ENCODE measurements at regions of chr6 and their contacts with region 1.

Region 1: GRCh38 chr6:5471044-5471443 is 209.7 kb downstream of the FARS2 start:
- DNase-seq: no peak
- ATAC-seq: peak; percentile 70 to 81
- H3K4me3 ChIP-seq: no peak overlapping the region
- H3K27ac ChIP-seq: no peak overlapping the region
- H3K4me1 ChIP-seq: peaks cover 0 to 6% of the 10 kb centered on the region in 2 donors
- H3K27me3 ChIP-seq: no peaks in the 10 kb centered on the region
- CTCF ChIP-seq: peak; percentile 45 to 82 (median 63)
- POLR2A ChIP-seq: no peak

Region 2: DNA sequence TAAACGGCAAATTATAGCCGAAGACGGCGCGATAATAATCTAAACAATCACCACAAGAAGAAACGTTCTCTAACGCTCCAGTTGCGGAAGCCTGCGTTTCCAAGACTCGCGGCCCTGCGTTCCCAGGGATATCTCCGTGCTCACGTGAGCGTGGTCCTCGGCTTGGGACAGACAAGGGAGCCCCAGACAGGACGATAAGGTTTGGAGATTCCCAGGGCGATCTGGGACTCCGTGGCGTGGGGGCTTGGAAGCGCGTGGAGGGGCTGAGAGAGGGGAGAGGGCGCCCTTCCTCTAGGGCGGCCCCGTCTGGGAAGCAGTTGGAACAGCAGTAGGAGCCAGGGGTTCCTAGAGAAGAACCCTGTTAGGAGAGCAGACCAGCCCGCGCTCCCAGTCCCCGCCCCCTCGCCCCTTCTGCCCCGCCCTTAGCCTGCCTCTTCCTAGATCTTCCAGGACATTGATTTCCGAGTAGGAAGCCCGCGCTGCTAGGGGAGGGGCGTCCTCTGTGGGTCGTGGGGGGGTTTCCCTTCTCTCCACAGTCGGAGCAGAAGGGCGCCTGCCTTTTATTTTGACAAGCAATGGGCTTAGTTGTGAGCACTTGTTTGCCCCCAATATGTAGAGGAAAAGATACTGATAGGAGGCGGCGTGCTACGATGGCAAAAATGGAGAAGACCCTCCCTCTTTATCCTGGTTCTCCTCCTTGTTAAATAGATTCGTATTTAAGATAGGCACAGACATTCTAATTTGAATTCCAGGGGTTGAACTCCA is 525.1 kb after region 1 on chr6:
- in situ Hi-C with region 1: loop called in 2 of 4 experiments (anchors 25 kb)
- intact Hi-C with region 1: no loop called
- DNase-seq: no peak
- ATAC-seq: peak; percentile 54 to 72
- H3K4me3 ChIP-seq: peak overlapping the region; percentile 61 to 76 (median 64)
- H3K27ac ChIP-seq: peak overlapping the region; percentile 38 to 74 (median 69)
- H3K4me1 ChIP-seq: peaks cover 15 to 26% of the 10 kb centered on the region in 2 donors
- H3K27me3 ChIP-seq: peaks cover 76 to 89% (median 84%) of the 10 kb centered on the region in 3 donors
- CTCF ChIP-seq: peak in 3 of 5 experiments; percentile 15 to 41 (median 18)
- POLR2A ChIP-seq: peak; percentile 17 to 42

Region 3: GRCh38 chr6:6008648-6009421 is 537.8 kb after region 1 on chr6:
- in situ Hi-C with region 1: loop called in 1 of 4 experiments (anchors 25 kb)
- intact Hi-C with region 1: loop called (anchors 5 kb)
- DNase-seq: no peak
- ATAC-seq: peak; percentile 53
- H3K4me3 ChIP-seq: peak overlapping the region; percentile 47 to 66 (median 54)
- H3K27ac ChIP-seq: peak overlapping the region; percentile 65 to 79 (median 73)
- H3K4me1 ChIP-seq: peaks cover 34 to 38% of the 10 kb centered on the region in 2 donors
- H3K27me3 ChIP-seq: peaks cover 66 to 86% (median 71%) of the 10 kb centered on the region in 3 donors
- CTCF ChIP-seq: no peak
- POLR2A ChIP-seq: peak in 1 of 2 donors; percentile 31

Measured in gastrocnemius medialis (tissue), 4 donors.